Right ventricle myocardium inferior (tissue), 1 donor: ENCODE measurements at regions of chr11 and their contacts with region 1.

Region 1: DNA sequence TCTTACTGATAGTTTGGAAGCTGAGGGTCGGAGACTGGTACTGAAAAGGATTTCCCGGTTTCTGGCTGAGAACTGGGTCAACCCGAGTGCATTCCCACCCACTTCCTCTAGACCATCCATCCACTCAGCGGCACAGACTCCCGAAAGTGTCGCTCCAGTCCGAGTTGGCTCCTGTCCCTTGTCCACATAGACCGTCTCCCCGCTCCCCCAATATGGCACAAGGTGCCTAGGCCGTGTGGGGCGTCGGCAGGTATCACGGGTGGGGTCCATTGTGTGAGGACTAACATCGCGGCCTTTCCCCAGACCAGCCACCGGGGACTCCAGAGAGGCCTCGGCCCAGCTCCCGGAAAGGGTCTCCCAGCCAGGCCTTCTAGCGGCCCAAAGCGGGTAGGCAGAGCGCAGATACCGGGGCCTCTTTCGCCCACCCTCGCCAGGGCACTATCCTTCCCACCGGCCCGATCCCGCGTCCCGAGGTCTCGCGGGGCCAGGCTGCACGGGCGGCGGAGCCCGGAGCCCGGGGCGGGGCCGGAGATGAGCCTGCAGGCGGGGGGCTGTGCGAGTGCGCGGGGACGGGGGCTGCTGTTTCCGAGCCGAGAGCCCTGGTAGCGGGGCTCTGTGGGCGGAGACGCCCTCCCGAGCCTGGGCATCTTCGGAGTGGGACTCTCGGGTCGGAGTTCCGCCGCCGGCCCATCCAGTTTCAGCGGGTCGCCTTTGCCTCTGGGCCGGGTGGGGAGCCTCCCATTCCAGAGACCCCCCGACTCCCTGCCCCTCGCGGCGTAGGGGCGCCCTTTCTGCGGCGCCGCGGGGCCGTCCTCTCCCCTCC is 21.1 kb downstream of the SERPINH1 start:
- DNase-seq: peak; percentile 82
- ATAC-seq: peak; percentile 77

Region 2: DNA sequence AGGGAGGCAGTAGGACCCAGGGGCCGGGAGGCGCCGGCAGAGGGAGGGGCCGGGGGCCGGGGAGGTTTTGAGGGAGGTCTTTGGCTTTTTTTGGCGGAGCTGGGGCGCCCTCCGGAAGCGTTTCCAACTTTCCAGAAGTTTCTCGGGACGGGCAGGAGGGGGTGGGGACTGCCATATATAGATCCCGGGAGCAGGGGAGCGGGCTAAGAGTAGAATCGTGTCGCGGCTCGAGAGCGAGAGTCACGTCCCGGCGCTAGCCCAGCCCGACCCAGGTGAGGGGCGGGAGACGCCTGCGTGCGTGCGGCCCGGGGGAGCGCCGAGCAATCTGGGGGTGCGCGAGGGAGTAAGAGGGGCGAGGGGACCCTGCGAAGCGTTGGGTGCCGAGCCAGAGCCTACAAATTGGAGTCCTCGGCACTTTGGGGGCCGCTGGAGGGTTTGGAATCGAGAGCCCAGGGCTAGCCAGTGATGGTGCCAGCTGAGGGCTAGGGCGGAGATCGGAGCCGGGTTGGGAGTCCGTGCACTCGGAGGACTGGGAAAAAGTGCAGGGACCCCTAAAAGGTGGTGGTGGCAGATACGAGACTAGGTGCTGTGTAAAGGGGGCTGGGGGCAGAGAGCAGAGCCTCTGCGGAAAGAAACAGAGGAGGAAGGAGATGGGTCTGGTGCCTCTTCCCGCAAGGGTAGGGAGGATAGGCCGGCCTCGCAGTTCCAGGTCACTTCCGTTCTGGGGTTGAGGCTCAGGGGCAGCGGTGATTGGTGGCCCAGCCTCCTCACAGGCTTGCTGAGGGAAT is 20.9 kb before region 1 on chr11 and contains the start of gene SERPINH1:
- intact Hi-C with region 1: loop called (anchors 2 kb)
- DNase-seq: peak; percentile 87
- ATAC-seq: peak; percentile 83
- total RNA-seq, gene SERPINH1: 65.8 TPM

Region 3: GRCh38 chr11:75639762-75640181 is 56.7 kb after region 1 on chr11:
- intact Hi-C with region 1: no loop called
- DNase-seq: peak; percentile 81
- ATAC-seq: peak; percentile 88